ENCODE measurements at regions of chr13 and their contacts with region 1.

Region 1: DNA sequence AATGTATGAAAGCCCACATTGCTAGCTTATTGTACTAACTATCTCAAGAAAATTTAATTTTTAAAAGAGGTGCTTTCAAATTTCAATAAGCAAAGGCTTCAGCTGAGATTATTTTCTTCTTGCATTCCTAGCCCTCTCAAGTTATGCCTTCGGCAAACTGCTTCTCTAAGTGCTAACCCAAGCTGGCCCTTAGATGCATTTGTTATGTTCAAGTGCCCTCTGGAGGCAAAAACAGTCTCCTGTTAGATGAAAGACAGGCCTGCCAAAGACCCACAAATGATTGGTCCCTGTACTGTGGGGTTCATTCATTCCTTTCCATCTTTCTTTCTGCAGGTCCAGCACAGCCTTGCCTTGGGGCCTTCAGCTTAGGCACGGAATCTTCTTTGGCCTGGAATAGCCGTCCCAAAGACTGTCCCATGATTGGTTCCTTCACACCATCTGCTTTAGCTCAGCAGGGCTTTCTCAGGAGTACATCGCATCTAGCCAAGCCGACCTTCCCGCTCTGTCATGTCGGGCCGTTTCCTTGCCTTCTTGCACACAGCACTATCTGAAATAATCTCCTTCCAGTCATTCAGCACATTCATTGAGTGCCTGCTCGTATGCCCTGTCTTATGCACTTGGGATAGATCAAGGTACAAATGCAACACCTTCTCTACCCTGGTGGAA is 26.4 kb upstream of the TPTE2 start:
- DNase-seq: no peak
- ATAC-seq: peak; percentile 89
- H3K4me3 ChIP-seq: peak overlapping the region; percentile 78; the same call in 1 of the 2 replicates
- H3K27ac ChIP-seq: peak overlapping the region; percentile 78
- H3K4me1 ChIP-seq: peaks cover 13% of the 10 kb centered on the region
- H3K27me3 ChIP-seq: no peaks in the 10 kb centered on the region
- CTCF ChIP-seq: peak; percentile 64 to 76 (median 64)
- EP300 ChIP-seq: no peak
- POLR2A ChIP-seq: no peak
- RAD21 ChIP-seq: peak; percentile 91

Region 2: GRCh38 chr13:19573120-19573716 is 14.6 kb before region 1 on chr13:
- CTCF ChIA-PET with region 1: interaction called, 38 read pairs
- POLR2A ChIA-PET with region 1: interaction called, 3 read pairs
- RAD21 ChIA-PET with region 1: interaction called, 24 read pairs
- SMC1A ChIA-PET with region 1: interaction called, 51 read pairs
- in situ Hi-C with region 1: no loop called
- intact Hi-C with region 1: no loop called
- DNase-seq: no peak
- ATAC-seq: peak; percentile 80
- H3K4me3 ChIP-seq: no peak overlapping the region
- H3K27ac ChIP-seq: no peak overlapping the region
- H3K4me1 ChIP-seq: peaks cover 14% of the 10 kb centered on the region
- H3K27me3 ChIP-seq: no peaks in the 10 kb centered on the region
- CTCF ChIP-seq: no peak
- EP300 ChIP-seq: 0 out of 4 replicates have a peak, but pooled peaks of 1 of the 2 experiments have one; percentile 44
- POLR2A ChIP-seq: no peak
- RAD21 ChIP-seq: no peak

Region 3: GRCh38 chr13:19618925-19619324 is 31.2 kb after region 1 on chr13:
- CTCF ChIA-PET with region 1: interaction called, 11 read pairs
- POLR2A ChIA-PET with region 1: no interaction called
- RAD21 ChIA-PET with region 1: no interaction called
- SMC1A ChIA-PET with region 1: interaction called, 4 read pairs
- in situ Hi-C with region 1: no loop called
- intact Hi-C with region 1: no loop called
- DNase-seq: no peak
- ATAC-seq: peak; percentile 80
- H3K4me3 ChIP-seq: no peak overlapping the region
- H3K27ac ChIP-seq: no peak overlapping the region
- H3K4me1 ChIP-seq: no peaks in the 10 kb centered on the region
- H3K27me3 ChIP-seq: no peaks in the 10 kb centered on the region
- CTCF ChIP-seq: peak; percentile 52 to 55 (median 52); a peak in 5 of 6 replicates
- EP300 ChIP-seq: no peak
- POLR2A ChIP-seq: no peak
- RAD21 ChIP-seq: peak; percentile 55